ENCODE measurements at regions of chr13 and their contacts with region 1.

Region 1: GRCh38 chr13:50745561-50746115 is 97.9 kb downstream of the DLEU7 start:
- DNase-seq: no peak
- H3K4me3 ChIP-seq: no peak overlapping the region
- H3K27ac ChIP-seq: no peak overlapping the region
- H3K4me1 ChIP-seq: no peaks in the 10 kb centered on the region
- H3K27me3 ChIP-seq: no peaks in the 10 kb centered on the region
- CTCF ChIP-seq: no peak
- POLR2A ChIP-seq: no peak

Region 2: DNA sequence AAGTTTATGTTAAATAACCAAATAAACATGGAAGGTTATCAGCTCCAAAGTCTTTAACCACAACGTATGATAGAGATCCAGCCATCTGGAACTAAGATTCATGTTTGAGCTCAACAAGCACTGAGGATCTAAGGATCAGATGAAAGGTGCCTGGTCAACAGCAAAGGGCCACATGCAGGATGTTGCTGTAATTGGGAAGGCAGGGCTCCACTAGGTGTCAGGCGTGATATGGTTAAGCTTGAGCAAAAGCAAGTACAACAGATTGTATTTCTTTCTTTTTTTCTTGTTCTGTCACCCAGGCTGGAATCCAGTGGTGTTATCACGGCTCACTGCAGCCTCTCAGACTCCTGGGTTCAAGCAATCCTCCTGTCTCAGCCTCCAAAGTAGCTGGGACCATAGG is 1066.4 kb before region 1 on chr13:
- intact Hi-C with region 1: loop called (anchors 5 kb)
- DNase-seq: no peak
- H3K4me3 ChIP-seq: no peak overlapping the region
- H3K27ac ChIP-seq: no peak overlapping the region
- H3K4me1 ChIP-seq: no peaks in the 10 kb centered on the region
- H3K27me3 ChIP-seq: no peaks in the 10 kb centered on the region
- CTCF ChIP-seq: no peak
- POLR2A ChIP-seq: no peak

Region 3: DNA sequence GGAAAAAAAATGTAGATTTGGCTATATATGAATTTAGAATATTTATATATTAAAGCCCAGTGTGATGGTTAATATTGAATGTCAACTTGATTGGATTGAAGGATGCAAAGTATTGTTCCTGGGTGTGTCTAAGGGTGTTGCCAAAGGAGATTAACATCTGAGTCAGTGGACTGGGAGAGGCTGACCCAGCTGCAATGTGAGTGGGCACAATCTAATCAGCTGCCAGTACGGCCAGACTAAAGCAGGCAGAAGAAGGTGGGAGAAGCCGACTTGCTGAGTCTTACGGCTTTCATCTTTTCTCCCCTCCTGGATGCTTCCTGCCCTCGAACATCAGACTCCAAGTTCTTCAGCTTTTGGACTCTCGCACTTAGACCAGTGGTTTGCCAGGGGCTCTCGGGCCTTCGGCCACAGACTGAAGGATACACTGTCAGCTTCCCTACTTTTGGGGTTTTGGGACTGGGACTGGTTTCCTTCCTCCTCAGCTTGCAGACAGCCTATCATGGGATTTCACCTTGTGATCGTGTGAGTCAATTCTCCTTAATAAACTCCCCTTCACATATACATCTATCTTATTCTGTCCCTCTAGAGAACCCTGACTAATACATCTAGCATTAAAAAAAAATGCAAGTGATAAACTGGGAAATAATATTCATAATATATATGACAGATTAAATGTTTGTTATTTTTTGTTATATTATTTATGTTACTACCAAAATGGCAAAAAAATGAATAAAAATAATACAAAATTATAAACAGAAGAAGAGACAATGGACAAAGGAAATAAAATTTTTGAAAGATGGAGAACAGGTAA is 24.6 kb before region 1 on chr13:
- intact Hi-C with region 1: loop called (anchors 2 kb)
- DNase-seq: no peak
- H3K4me3 ChIP-seq: no peak overlapping the region
- H3K27ac ChIP-seq: no peak overlapping the region
- H3K4me1 ChIP-seq: no peaks in the 10 kb centered on the region
- H3K27me3 ChIP-seq: no peaks in the 10 kb centered on the region
- CTCF ChIP-seq: no peak
- POLR2A ChIP-seq: no peak